ENCODE measurements at regions of chr3 and their contacts with region 1.

Region 1: DNA sequence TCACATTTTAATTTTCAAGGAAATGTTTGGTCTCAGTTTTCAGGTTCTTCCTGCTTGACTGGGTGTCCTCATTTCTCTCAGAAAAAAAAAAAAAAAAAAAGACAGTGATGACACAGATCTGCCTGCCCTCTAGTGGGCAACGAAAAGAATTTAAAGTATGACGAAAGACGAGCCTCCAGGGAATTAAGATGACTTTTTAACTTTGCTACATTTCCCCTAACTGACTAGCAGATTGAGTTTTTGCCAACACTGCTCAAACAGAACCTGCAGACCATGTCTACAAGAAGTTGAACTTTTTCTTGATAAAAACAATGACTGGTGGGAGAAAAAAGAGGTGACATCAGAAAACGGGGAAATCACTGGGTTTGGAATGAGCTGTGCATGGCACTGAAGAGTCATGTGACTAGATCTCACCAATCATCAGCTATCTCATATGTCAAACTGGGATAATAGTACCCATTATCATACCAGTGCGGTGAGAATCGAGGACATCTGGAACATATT is 40.8 kb downstream of the EOMES start:
- DNase-seq: peak; percentile 54
- H3K4me3 ChIP-seq: no peak overlapping the region
- CTCF ChIP-seq: peak; percentile 24

Region 2: GRCh38 chr3:27275441-27275990 is 405.8 kb before region 1 on chr3:
- CTCF ChIA-PET with region 1: no interaction called
- POLR2A ChIA-PET with region 1: no interaction called
- DNase-seq: no peak
- H3K4me3 ChIP-seq: no peak overlapping the region
- CTCF ChIP-seq: no peak

Region 3: DNA sequence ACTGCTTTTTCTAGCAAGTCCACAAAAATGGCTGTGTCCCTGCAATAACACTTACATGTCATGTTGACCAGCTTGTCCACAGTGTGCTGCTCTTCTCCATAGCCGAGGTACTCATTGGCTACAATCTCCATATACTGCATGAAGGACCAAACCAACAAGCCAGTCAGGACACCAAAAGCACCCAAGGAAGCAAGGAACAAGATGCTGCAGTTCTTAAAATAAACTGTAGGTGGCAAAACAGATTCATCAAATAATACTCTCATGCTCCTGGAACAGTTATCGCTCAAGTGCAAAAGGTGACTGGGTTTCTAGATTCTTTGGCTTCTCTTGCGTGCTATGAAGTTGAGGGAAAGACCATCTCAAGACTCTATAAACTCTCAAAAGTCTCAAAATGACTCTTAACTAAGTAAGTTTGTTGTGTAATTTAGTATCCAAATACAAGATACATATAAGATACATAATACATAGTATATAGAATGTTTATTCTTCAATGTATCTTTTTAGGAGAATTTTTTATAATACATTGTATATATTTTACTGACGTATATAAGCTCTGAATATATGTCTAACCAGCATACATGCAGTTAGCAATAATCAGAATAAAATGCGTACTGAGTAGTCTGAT is 369.1 kb before region 1 on chr3:
- CTCF ChIA-PET with region 1: interaction called, 14 read pairs
- POLR2A ChIA-PET with region 1: no interaction called
- DNase-seq: peak; percentile 46
- H3K4me3 ChIP-seq: no peak overlapping the region
- CTCF ChIP-seq: peak; percentile 54

Region 4: DNA sequence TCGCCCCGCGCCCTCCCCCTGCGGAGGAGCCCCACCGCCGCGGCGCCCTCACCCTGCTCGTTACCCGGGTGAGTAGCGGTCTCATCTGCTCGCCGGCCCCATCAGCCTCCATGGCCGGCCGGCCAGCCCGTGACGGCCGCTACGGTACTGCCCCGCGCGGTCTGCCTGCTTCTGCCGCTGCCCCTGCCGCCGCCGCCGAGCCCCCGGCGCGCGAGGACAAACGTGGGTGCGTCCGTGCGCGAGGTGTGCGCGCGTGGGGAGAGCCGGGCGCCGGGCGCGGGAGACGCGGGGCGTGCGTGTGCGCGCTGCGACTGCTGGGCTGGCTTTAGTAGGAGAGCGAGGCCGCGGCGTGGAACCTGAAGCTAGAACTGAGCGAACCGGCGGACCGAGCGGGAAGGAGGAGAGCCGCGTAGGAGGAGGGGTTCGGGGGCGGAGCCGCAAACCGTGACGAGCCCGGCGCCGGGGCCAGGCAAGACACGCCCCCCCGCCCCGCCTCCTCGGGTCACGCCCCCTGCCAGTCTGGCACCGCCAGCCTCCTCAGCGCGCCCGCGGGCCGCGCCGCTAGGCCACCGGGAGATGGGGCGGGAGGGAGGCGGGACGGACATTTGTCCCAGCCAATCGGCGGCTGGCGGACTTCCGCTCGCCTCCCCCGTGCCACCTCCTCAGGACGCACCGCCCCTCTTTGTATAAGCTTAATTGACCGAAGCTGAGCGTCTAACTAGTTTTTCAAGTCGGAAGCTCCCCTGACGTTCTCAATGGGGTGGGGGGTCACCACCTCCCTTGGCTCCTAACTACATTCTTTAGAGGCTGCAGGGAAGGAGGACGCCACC is 197.1 kb before region 1 on chr3 and contains the start of gene SLC4A7:
- CTCF ChIA-PET with region 1: interaction called, 14 read pairs
- POLR2A ChIA-PET with region 1: interaction called, 3 read pairs
- DNase-seq: peak; percentile 64
- H3K4me3 ChIP-seq: peak within 1 kb of the TSS; percentile 80
- CTCF ChIP-seq: no peak

Region 5: GRCh38 chr3:27533718-27534573 is 147.4 kb before region 1 on chr3:
- CTCF ChIA-PET with region 1: interaction called, 15 read pairs
- POLR2A ChIA-PET with region 1: interaction called, 6 read pairs
- DNase-seq: peak; percentile 98
- H3K4me3 ChIP-seq: no peak overlapping the region; the same call in 1 of the 2 replicates
- CTCF ChIP-seq: peak; percentile 79

Region 6: DNA sequence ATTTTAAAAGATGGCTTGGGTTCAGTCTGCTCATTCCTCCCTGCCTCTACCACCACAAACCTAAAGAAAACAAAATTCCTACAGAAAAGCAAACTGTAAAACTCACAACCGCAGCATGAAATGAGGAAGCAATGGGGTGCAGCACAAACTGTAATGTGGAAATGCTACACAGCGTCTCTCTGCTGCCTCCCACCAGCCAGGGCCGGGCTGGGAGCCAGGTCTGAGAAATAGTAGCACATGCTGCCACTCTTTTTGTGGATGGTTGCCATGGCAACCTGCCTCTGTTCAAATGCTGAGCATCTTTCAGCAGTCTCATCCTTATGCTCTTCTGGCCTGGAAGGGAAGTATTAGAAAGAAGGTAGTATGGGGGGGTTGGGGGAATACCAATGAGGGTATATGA is 14.6 kb before region 1 on chr3:
- CTCF ChIA-PET with region 1: interaction called, 11 read pairs
- POLR2A ChIA-PET with region 1: no interaction called
- DNase-seq: peak; percentile 68
- H3K4me3 ChIP-seq: no peak overlapping the region
- CTCF ChIP-seq: peak; percentile 18

Region 7: GRCh38 chr3:27861046-27862036 is 180.0 kb after region 1 on chr3:
- CTCF ChIA-PET with region 1: no interaction called
- POLR2A ChIA-PET with region 1: no interaction called
- DNase-seq: no peak
- H3K4me3 ChIP-seq: no peak overlapping the region
- CTCF ChIP-seq: no peak

Measured in AG04449 (cell line).